Calu3 (cell line): ENCODE measurements at regions of chr7 and their contacts with region 1.

Region 1: DNA sequence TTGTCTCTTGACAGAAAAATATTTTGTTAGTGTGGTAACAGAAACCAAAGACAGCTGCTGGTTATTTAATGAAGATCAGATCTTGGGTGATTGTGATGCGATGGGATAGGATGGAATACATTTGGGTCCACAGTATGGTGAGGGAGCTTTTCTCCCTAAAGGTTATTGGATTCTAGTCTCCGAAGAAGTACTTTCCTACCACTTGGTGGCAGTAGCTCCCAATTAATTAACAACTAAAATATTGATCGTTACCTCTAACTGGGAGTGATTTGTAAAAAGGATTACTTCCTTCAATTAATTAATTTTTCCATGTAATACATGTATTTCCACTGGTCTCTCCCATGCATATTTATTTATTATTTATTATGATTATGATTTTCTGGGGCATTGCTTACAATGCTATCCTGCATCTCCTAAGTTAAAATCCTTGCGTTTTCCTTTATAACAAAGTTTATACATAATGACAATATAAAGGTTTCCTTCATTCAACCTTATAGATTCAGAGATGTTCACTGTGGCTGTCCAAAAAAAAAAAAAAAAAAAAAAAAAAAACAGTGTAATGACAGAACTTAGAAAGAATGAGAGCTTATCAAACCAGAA is 25.6 kb downstream of the TMEM196 start:
- DNase-seq: peak; percentile 39
- H3K4me3 Mint-ChIP-seq: no peak overlapping the region
- H3K27ac Mint-ChIP-seq: no peak overlapping the region
- H3K4me1 Mint-ChIP-seq: peaks cover 26% of the 10 kb centered on the region
- H3K27me3 Mint-ChIP-seq: no peaks in the 10 kb centered on the region
- CTCF ChIP-seq: peak; percentile 86

Region 2: GRCh38 chr7:19713676-19714075 is 34.2 kb before region 1 on chr7:
- CTCF ChIA-PET with region 1: interaction called, 23 read pairs
- intact Hi-C with region 1: no loop called
- DNase-seq: peak; percentile 66
- H3K4me3 Mint-ChIP-seq: no peak overlapping the region
- H3K27ac Mint-ChIP-seq: no peak overlapping the region
- H3K4me1 Mint-ChIP-seq: peaks cover 31% of the 10 kb centered on the region
- H3K27me3 Mint-ChIP-seq: no peaks in the 10 kb centered on the region
- CTCF ChIP-seq: peak; percentile 53

Region 3: GRCh38 chr7:20132631-20133030 is 384.8 kb after region 1 on chr7:
- CTCF ChIA-PET with region 1: no interaction called
- intact Hi-C with region 1: loop called (anchors 5 kb)
- DNase-seq: no peak
- H3K4me3 Mint-ChIP-seq: no peak overlapping the region
- H3K27ac Mint-ChIP-seq: peak overlapping the region; percentile 30
- H3K4me1 Mint-ChIP-seq: peaks cover 9% of the 10 kb centered on the region
- H3K27me3 Mint-ChIP-seq: no peaks in the 10 kb centered on the region
- CTCF ChIP-seq: no peak

Region 4: DNA sequence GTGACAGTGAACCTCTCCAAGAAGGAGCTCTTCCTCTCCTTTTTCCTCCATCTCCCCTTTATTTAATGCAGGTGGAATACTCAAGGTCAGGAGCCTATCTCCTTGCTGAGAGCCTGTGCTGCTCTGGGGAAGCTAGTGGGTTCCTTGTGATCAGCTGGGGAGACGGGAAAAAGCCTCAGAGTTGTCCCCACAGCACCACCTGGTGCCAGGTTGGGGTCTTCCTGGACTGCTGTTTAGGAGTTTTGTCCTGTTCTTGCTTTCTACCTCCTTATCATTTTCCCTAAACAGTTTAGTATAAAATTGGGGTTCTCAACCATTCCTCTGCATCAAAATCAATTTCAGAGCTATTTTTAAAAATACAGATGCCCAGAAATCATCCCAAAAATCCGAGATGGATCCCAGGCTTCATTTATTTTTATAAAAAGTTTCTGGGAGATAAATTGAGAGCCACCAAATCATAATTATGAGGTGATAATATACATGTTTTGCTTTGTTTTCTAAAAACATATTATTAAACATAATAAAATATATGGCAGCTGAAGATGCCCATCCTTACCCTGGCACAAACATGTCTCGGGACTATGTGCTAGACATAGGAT is 425.0 kb after region 1 on chr7:
- CTCF ChIA-PET with region 1: interaction called, 16 read pairs
- intact Hi-C with region 1: loop called (anchors 2 kb)
- DNase-seq: peak; percentile 81
- H3K4me3 Mint-ChIP-seq: no peak overlapping the region
- H3K27ac Mint-ChIP-seq: no peak overlapping the region
- H3K4me1 Mint-ChIP-seq: peaks cover 22% of the 10 kb centered on the region
- H3K27me3 Mint-ChIP-seq: no peaks in the 10 kb centered on the region
- CTCF ChIP-seq: peak; percentile 78

Region 5: GRCh38 chr7:20310963-20311742 is 563.3 kb after region 1 on chr7:
- CTCF ChIA-PET with region 1: interaction called, 4 read pairs
- intact Hi-C with region 1: loop called (anchors 1 kb)
- DNase-seq: peak; percentile 50
- H3K4me3 Mint-ChIP-seq: no peak overlapping the region
- H3K27ac Mint-ChIP-seq: peak overlapping the region; percentile 30
- H3K4me1 Mint-ChIP-seq: peaks cover 42% of the 10 kb centered on the region
- H3K27me3 Mint-ChIP-seq: no peaks in the 10 kb centered on the region
- CTCF ChIP-seq: peak; percentile 71

Region 6: GRCh38 chr7:20393021-20393610 is 645.3 kb after region 1 on chr7:
- CTCF ChIA-PET with region 1: interaction called, 11 read pairs
- intact Hi-C with region 1: no loop called
- DNase-seq: peak; percentile 39
- H3K4me3 Mint-ChIP-seq: peak overlapping the region; percentile 23
- H3K27ac Mint-ChIP-seq: peak overlapping the region; percentile 38
- H3K4me1 Mint-ChIP-seq: peaks cover 42% of the 10 kb centered on the region
- H3K27me3 Mint-ChIP-seq: no peaks in the 10 kb centered on the region
- CTCF ChIP-seq: no peak